Activated T-helper 2 cell treated with anti-CD3 and anti-CD28 coated beads, Interferon-gamma antibody, Interleukin-2, Interleukin-4, amounts not matched to agents 10 μg/mL and 5 μg/mL and 100 μg/mL, durations not matched to agents 14 hours and 24 hours and 36 hours (primary cell): ENCODE measurements at regions of chr1 and their contacts with region 1.

Region 1: DNA sequence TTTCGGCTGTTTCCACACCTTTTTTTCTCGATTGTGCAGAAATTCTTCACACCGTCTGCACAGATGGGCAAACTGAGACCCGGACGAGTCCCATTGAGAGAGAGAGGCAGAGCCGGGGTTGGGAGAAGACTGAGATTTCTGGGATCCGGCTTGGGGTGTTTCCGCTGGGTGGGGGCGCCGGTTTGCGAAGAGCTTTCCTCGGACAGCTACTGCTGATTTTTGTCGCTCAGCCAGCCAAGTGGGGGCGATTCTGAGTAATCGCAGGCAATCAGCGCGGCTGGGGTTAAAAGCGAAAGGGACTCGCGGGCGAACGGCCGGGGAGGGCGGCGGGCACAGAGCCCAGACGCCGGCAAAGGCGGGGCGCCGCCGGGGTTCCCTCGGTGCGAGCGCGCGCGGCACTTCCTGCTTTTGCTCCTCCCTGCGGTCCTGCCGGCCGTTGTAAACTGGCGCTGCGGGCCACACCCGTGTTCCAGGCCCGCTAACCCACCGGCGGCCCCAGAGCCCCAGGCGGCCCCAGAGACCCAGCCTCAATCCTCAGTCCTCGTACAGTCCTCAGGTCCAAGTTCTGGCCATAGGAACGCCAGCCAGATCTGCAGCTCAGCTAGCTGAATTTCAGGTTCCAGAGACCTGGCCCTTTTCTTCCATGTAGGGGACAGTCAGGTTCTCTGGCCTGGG is 32.4 kb upstream of the JUN start:
- DNase-seq: peak; percentile 85
- H3K4me3 Mint-ChIP-seq: peak overlapping the region; percentile 76
- H3K27ac Mint-ChIP-seq: peak overlapping the region; percentile 73
- H3K4me1 Mint-ChIP-seq: peaks cover 43% of the 10 kb centered on the region
- H3K27me3 Mint-ChIP-seq: peaks cover 7% of the 10 kb centered on the region

Region 2: GRCh38 chr1:58709540-58710175 is 106.6 kb before region 1 on chr1:
- intact Hi-C with region 1: no loop called
- DNase-seq: no peak
- H3K4me3 Mint-ChIP-seq: no peak overlapping the region
- H3K27ac Mint-ChIP-seq: no peak overlapping the region
- H3K4me1 Mint-ChIP-seq: peaks cover 1% of the 10 kb centered on the region
- H3K27me3 Mint-ChIP-seq: peaks cover 12% of the 10 kb centered on the region

Region 3: GRCh38 chr1:58755468-58755872 is 60.7 kb before region 1 on chr1:
- intact Hi-C with region 1: loop called (anchors 2 kb)
- DNase-seq: peak; percentile 30
- H3K4me3 Mint-ChIP-seq: peak overlapping the region; percentile 46
- H3K27ac Mint-ChIP-seq: peak overlapping the region; percentile 86
- H3K4me1 Mint-ChIP-seq: peaks cover 60% of the 10 kb centered on the region
- H3K27me3 Mint-ChIP-seq: no peaks in the 10 kb centered on the region

Region 4: DNA sequence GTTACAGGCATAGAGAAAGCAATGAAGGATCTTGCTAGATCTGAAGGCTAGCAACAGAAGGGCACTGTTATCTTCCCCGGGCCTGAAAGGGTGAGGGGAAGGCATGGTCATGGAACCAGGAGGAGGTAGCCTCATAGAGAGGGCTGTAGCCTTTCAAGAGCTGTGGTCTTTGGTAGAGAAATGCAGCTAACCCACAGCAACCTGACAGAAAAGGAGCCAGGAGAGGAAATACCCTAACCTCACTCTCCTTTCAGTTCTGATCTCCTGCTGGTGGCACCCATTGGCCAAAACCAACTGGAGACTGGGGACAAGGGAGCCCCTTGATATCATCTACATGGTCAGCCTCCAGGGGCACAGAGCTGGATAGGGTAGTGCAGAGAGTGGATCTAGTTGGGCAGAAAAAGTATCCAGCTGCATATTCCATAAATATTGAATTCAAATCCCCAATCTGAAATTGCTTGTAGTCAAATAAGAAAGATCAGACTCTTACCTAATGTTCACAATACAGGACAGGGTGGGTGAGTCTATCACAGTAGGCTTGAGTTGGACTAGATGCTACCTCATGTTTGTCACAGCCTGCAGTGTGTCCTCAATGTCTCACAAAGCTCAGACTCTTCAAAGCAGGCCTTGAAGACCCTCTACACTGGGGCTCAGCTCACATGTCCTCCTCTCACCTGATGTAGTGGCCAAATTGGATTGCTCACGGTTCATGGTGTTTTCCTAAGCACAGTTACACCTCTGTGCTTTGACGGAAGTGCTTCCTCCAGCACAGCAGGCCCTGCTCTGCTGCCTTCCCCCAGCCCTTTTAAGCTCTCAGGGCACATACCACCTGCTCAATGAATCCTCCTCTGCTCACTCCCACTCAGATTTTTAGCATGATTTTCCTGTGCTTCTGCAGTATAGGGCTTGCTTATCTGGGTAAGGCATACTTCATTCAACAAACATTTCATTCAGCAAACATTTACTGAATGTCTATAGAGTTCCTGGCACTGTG is 41.8 kb after region 1 on chr1:
- intact Hi-C with region 1: loop called (anchors 5 kb)
- DNase-seq: peak; percentile 17
- H3K4me3 Mint-ChIP-seq: no peak overlapping the region
- H3K27ac Mint-ChIP-seq: peak overlapping the region; percentile 83
- H3K4me1 Mint-ChIP-seq: peaks cover 31% of the 10 kb centered on the region
- H3K27me3 Mint-ChIP-seq: no peaks in the 10 kb centered on the region

Region 5: GRCh38 chr1:58884706-58885661 is 68.8 kb after region 1 on chr1:
- intact Hi-C with region 1: loop called (anchors 5 kb)
- DNase-seq: no peak
- H3K4me3 Mint-ChIP-seq: no peak overlapping the region
- H3K27ac Mint-ChIP-seq: no peak overlapping the region
- H3K4me1 Mint-ChIP-seq: peaks cover 31% of the 10 kb centered on the region
- H3K27me3 Mint-ChIP-seq: no peaks in the 10 kb centered on the region

Region 6: DNA sequence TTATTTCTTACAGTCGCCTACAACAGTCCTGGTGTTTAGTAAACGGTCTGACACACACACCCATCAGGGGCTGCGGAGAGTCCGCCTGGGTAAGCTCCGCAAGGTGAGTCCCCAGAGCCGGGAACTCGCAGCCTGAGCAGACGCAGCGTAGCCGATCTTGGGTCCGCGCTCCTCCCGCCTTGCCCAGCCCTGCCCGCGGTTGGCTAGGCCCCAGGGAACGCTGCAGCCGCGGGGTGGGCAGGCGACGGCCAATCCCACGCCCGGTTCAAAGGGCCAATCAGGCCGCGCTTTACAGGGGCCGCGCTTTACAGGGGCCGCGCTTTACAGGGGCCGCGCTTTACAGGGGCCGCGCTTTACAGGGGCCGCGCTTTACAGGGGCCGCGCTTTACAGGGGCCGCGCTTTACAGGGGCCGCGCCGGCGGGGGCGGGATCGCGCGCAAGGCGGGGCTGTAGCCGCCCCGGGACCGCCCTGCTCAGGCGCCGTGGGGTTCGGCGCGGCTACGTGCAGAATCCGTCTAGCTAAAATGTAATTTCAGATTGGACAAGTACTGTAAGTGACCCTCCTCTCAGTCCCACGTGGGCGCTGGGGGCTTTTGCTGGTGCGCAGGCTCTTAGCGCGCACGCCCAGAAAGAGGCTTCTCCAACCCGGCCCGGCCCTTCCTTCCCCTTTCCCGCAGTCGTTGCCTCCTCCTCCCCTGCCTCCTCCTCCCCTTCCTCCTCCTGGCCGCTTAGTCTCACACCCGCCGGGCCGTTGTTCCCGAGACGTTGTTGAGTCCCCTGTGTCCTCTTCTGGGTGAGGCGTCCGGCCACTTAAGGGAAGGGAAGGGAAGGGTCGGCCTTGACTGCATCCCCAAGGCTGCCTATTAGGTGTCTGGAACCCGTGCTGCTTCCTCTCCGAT is 480.4 kb after region 1 on chr1 and contains the start of gene FGGY:
- intact Hi-C with region 1: loop called (anchors 2 kb)
- DNase-seq: peak; percentile 85
- H3K4me3 Mint-ChIP-seq: peak within 1 kb of the TSS; percentile 93
- H3K27ac Mint-ChIP-seq: peak within 1 kb of the TSS; percentile 88
- H3K4me1 Mint-ChIP-seq: peaks cover 36% of the 10 kb centered on the region
- H3K27me3 Mint-ChIP-seq: no peaks in the 10 kb centered on the region
- total RNA-seq, gene FGGY: 10.5 and 13.4 TPM in 2 replicates